Naive thymus-derived CD4-positive, alpha-beta T cell (primary cell): ENCODE measurements at regions of chr1 and their contacts with region 1.

Region 1: DNA sequence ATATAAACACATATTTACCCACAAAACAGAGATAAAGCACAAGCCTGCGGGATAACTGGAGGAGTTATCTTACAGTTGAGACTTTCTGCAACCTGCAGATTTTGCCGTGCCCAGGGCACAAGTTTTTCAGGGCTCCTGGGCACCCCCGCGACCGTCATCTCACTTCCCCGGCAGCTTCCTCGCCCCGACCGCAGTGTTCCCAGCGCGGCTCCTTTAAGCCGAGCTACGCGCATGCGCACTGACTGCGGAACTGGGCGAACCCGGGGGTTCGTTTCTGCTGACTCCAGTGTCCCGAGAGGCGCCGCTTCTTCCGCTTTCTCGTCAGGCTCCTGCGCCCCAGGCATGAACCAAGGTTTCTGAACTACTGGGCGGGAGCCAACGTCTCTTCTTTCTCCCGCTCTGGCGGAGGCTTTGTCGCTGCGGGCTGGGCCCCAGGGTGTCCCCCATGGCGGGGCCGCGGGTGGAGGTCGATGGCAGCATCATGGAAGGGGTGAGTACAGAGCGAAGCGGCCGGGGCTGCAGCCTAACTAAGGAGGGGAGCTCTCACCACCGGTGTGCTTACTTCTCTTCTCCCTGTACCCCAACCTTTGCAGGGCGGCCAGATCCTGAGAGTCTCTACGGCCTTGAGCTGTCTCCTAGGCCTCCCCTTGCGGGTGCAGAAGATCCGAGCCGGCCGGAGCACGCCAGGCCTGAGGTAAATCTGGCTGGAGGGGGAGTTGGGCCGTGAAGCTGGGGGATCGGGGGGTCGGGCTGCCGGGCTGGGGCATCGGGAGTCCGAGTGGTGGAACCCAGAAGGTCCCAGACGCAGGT is at the start of gene RTCA:
- DNase-seq: peak; percentile 91 to 95 (median 94)
- ATAC-seq: peak; percentile 98
- H3K4me3 ChIP-seq: peak within 1 kb of the TSS; percentile 88
- H3K4me3 Mint-ChIP-seq: peak within 1 kb of the TSS; percentile 97 to 100 (median 100)
- H3K27ac ChIP-seq: peak within 1 kb of the TSS; percentile 88
- H3K27ac Mint-ChIP-seq: peak within 1 kb of the TSS; percentile 94 to 99 (median 97)
- H3K4me1 ChIP-seq: peaks cover 25 to 26% of the 10 kb centered on the region in 2 donors
- H3K4me1 Mint-ChIP-seq: peaks cover 23 to 58% (median 51%) of the 10 kb centered on the region in 7 donors
- H3K27me3 ChIP-seq: no peaks in the 10 kb centered on the region
- H3K27me3 Mint-ChIP-seq: peaks cover 0 to 3% (median 0%) of the 10 kb centered on the region in 5 donors
- total RNA-seq, gene RTCA: 33.3 to 47.7 (median 35.8) TPM

Region 2: DNA sequence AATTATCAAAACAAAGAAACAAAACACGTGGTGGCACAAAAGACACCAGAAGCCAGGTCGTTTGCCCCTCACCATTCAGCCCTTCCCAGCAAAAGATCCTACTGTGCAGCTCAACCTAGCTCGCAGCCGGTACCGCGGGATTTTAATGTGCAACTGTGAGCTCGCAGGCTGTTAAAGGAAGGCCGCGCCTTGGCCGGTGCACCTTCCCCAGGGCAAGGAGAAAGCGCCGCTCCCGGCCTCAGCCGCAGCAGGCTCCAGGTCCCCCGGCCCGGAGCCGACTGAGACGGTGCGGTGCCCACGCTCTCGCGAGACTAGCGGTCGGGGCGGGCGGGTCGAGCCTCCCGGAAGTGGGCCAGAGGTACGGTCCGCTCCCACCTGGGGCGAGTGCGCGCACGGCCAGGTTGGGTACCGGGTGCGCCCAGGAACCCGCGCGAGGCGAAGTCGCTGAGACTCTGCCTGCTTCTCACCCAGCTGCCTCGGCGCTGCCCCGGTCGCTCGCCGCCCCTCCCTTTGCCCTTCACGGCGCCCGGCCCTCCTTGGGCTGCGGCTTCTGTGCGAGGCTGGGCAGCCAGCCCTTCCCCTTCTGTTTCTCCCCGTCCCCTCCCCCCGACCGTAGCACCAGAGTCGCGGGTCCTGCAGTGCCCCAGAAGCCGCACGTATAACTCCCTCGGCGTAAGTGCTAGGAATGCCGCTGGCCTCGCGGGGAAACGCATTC is 416.2 kb before region 1 on chr1 and contains the start of gene AGL:
- CTCF ChIA-PET with region 1: no interaction called
- POLR2A ChIA-PET with region 1: no interaction called
- intact Hi-C with region 1: loop called (anchors 2 to 5 kb)
- DNase-seq: peak; percentile 76 to 88 (median 86)
- ATAC-seq: peak; percentile 97
- H3K4me3 ChIP-seq: peak within 1 kb of the TSS; percentile 81
- H3K4me3 Mint-ChIP-seq: peak within 1 kb of the TSS; percentile 89 to 99 (median 96)
- H3K27ac ChIP-seq: peak within 1 kb of the TSS; percentile 75
- H3K27ac Mint-ChIP-seq: peak within 1 kb of the TSS; percentile 86 to 98 (median 96)
- H3K4me1 ChIP-seq: peaks cover 7 to 10% of the 10 kb centered on the region in 2 donors
- H3K4me1 Mint-ChIP-seq: peaks cover 20 to 42% (median 37%) of the 10 kb centered on the region in 7 donors
- H3K27me3 ChIP-seq: no peaks in the 10 kb centered on the region
- H3K27me3 Mint-ChIP-seq: no peaks in the 10 kb centered on the region
- total RNA-seq, gene AGL: 11.5 to 20.1 (median 12.5) TPM

Region 3: DNA sequence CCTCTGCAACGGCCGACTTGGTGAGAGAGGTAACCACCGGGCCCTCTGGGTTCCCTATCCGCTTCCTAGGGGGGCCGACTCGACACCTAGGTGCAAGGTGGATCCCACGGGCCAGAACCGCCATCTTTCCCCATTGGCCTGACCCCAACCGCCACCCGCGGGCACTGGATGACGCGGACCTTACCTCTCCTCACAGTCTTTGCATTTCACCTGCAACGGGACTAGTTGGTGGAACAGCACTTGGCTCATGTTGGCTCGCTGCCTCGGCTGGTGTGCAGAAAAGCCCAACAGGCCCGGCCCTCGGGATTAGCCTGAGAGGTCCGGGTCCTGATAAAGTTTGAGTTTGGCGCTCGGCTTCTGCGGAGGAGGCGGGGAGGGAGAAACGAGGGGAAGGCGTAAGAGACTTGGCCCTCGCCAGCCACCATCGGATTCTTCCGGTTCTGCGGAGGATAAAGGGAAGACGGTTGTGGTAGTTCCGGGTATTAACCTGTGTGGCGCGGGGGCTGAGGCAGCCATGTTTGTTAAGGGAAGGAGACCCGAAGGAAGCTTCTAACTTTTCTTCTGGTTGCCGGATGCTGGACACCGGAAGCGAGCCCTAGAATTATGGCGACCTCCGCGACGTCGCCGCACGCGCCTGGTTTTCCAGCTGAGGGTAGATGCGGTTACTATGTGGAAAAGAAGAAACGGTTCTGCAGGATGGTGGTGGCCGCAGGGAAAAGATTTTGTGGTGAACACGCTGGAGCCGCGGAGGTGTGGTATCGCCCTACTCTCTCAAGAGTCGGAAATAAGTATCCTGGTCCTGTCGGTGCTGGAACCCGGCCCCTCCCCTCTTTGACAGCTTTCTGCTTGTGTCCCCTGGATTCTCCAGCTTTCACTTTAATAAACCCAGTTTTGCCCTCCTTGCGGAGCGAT is 133.3 kb before region 1 on chr1 and contains the starts of genes SASS6 and TRMT13:
- CTCF ChIA-PET with region 1: no interaction called
- POLR2A ChIA-PET with region 1: interaction called, 3 read pairs
- intact Hi-C with region 1: loop called (anchors 1 kb)
- DNase-seq: peak; percentile 73 to 96 (median 94)
- ATAC-seq: peak; percentile 99
- H3K4me3 ChIP-seq: peak within 1 kb of the TSS; percentile 92
- H3K4me3 Mint-ChIP-seq: peak within 1 kb of the TSS; percentile 90 to 99 (median 98)
- H3K27ac ChIP-seq: peak within 1 kb of the TSS; percentile 74
- H3K27ac Mint-ChIP-seq: peak within 1 kb of the TSS; percentile 86 to 99 (median 96)
- H3K4me1 ChIP-seq: peaks cover 9 to 15% of the 10 kb centered on the region in 2 donors
- H3K4me1 Mint-ChIP-seq: peaks cover 7 to 53% (median 39%) of the 10 kb centered on the region in 7 donors
- H3K27me3 ChIP-seq: no peaks in the 10 kb centered on the region
- H3K27me3 Mint-ChIP-seq: no peaks in the 10 kb centered on the region
- total RNA-seq, gene SASS6: 2.5 to 11.6 (median 5.6) TPM
- total RNA-seq, gene TRMT13: 15.3 to 60.3 (median 23.9) TPM

Region 4: GRCh38 chr1:100249537-100250257 is 16.4 kb before region 1 on chr1 and contains the start of gene DBT:
- CTCF ChIA-PET with region 1: no interaction called
- POLR2A ChIA-PET with region 1: interaction called, 31 read pairs
- intact Hi-C with region 1: loop called (anchors 1 kb)
- DNase-seq: peak; percentile 64 to 93 (median 88)
- ATAC-seq: peak; percentile 100
- H3K4me3 ChIP-seq: peak within 1 kb of the TSS; percentile 82
- H3K4me3 Mint-ChIP-seq: peak within 1 kb of the TSS in 1 of 10 donors; percentile 30
- H3K27ac ChIP-seq: peak within 1 kb of the TSS; percentile 79
- H3K27ac Mint-ChIP-seq: peak within 1 kb of the TSS in 2 of 9 donors; percentile 22 to 26
- H3K4me1 ChIP-seq: peaks cover 7 to 23% of the 10 kb centered on the region in 2 donors
- H3K4me1 Mint-ChIP-seq: peaks cover 9 to 24% (median 19%) of the 10 kb centered on the region in 7 donors
- H3K27me3 ChIP-seq: no peaks in the 10 kb centered on the region
- H3K27me3 Mint-ChIP-seq: peaks cover 0 to 8% (median 0%) of the 10 kb centered on the region in 5 donors
- total RNA-seq, gene DBT: 9.2 to 18.4 (median 9.7) TPM

Region 5: GRCh38 chr1:100443811-100444571 is 177.9 kb after region 1 on chr1:
- CTCF ChIA-PET with region 1: no interaction called
- POLR2A ChIA-PET with region 1: interaction called, 3 read pairs
- intact Hi-C with region 1: loop called in 1 of 2 experiments (anchors 5 kb)
- DNase-seq: peak in 5 of 9 donors; percentile 31 to 42 (median 36)
- ATAC-seq: peak; percentile 6
- H3K4me3 ChIP-seq: peak overlapping the region; percentile 12
- H3K4me3 Mint-ChIP-seq: peak overlapping the region; percentile 66 to 86 (median 81)
- H3K27ac ChIP-seq: peak overlapping the region; percentile 93
- H3K27ac Mint-ChIP-seq: peak overlapping the region; percentile 92 to 99 (median 98)
- H3K4me1 ChIP-seq: peaks cover 83 to 84% of the 10 kb centered on the region in 2 donors
- H3K4me1 Mint-ChIP-seq: peaks cover 53 to 95% (median 87%) of the 10 kb centered on the region in 7 donors
- H3K27me3 ChIP-seq: no peaks in the 10 kb centered on the region
- H3K27me3 Mint-ChIP-seq: no peaks in the 10 kb centered on the region

Region 6: DNA sequence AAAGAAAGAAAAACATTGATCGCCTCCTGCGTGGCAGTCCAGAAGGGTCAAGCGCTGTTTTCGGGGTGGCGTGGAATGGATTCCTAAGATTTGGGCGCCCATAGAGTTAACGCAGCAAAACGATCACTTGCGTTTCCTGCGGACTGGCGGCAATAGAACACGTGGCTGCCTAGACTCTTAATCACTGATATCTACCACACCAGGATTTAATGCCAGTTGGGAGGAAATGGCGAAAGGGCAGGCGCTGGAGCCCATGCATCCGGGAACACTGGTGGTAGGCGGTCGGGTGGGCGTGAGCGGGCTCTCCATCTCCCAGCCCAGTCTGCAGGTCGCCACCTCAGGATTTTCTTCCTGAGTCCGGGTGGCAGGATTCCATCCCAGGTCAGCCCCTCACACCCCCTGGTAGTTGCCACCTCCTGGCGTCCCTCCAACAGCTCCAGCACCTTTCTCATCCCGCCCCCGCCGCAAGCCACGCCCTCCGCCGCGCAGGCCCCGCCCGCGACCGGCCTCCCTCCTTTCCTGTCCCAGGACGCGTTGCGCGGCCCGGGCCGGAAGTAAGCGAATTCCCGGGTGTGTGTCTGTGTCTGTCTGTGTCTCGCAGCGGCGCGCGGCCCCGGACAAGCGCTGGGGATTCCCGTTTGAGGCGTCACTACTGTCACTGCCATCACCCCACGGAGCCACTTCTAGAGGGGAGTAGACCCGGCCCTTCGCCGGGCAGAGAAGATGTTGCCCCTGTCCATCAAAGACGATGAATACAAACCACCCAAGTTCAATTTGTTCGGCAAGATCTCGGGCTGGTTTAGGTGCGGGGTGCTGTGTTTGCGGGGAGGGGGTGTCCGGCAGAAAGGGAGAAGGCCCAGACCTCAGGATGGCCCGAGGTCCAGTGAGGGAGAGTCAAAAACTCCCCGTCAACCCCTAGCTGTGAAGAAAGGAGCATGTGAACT is 629.7 kb after region 1 on chr1 and contains the start of gene SLC30A7:
- CTCF ChIA-PET with region 1: no interaction called
- POLR2A ChIA-PET with region 1: no interaction called
- intact Hi-C with region 1: loop called (anchors 1 to 5 kb)
- DNase-seq: peak; percentile 93 to 99 (median 94)
- ATAC-seq: peak; percentile 90
- H3K4me3 ChIP-seq: peak within 1 kb of the TSS; percentile 96
- H3K4me3 Mint-ChIP-seq: peak within 1 kb of the TSS; percentile 91 to 100 (median 99)
- H3K27ac ChIP-seq: peak within 1 kb of the TSS; percentile 95
- H3K27ac Mint-ChIP-seq: peak within 1 kb of the TSS; percentile 95 to 100 (median 99)
- H3K4me1 ChIP-seq: peaks cover 7 to 10% of the 10 kb centered on the region in 2 donors
- H3K4me1 Mint-ChIP-seq: peaks cover 17 to 58% (median 50%) of the 10 kb centered on the region in 7 donors
- H3K27me3 ChIP-seq: no peaks in the 10 kb centered on the region
- H3K27me3 Mint-ChIP-seq: no peaks in the 10 kb centered on the region
- total RNA-seq, gene SLC30A7: 29.9 to 44.5 (median 38.8) TPM

Region 7: GRCh38 chr1:100982792-100983191 is 716.7 kb after region 1 on chr1:
- CTCF ChIA-PET with region 1: no interaction called
- POLR2A ChIA-PET with region 1: no interaction called
- intact Hi-C with region 1: no loop called
- DNase-seq: no peak
- ATAC-seq: no peak
- H3K4me3 ChIP-seq: no peak overlapping the region
- H3K4me3 Mint-ChIP-seq: no peak overlapping the region
- H3K27ac ChIP-seq: no peak overlapping the region
- H3K27ac Mint-ChIP-seq: peak overlapping the region in 5 of 9 donors; percentile 4 to 67 (median 42)
- H3K4me1 ChIP-seq: no peaks in the 10 kb centered on the region
- H3K4me1 Mint-ChIP-seq: peaks cover 0 to 53% (median 43%) of the 10 kb centered on the region in 7 donors
- H3K27me3 ChIP-seq: no peaks in the 10 kb centered on the region
- H3K27me3 Mint-ChIP-seq: no peaks in the 10 kb centered on the region